Thyroid gland (tissue), 4 donors: ENCODE measurements at regions of chr5 and their contacts with region 1.

Region 1: DNA sequence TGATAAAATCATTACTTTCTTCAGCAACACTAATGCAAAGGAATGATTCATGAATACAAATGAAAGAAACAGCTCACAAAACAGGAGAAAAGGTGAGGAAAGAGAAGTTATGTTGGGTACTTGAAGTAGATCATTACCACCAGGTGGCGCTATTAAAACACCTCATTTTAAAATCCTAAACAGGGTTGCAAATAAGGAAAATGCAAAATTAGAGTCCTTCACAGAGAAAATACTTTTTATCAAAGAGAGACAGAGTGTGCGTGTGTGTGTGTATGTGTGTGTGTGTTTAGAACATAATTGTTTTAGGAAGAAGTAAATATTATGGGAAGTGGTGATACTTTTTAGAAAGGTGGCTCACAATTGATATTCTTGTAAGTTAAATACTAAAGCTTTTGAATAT is 49.5 kb upstream of the CD180 start:
- DNase-seq: no peak
- H3K4me3 ChIP-seq: no peak overlapping the region
- H3K27ac ChIP-seq: peak overlapping the region; percentile 34 to 68 (median 59)
- H3K4me1 ChIP-seq: peaks cover 31 to 37% of the 10 kb centered on the region in 2 donors
- H3K27me3 ChIP-seq: no peaks in the 10 kb centered on the region
- CTCF ChIP-seq: peak; percentile 59 to 98 (median 69)
- POLR2A ChIP-seq: no peak

Region 2: GRCh38 chr5:68252673-68253623 is 1006.8 kb after region 1 on chr5:
- intact Hi-C with region 1: loop called (anchors 10 kb)
- DNase-seq: peak; percentile 65 to 71
- H3K4me3 ChIP-seq: no peak overlapping the region
- H3K27ac ChIP-seq: peak overlapping the region; percentile 2 to 74 (median 19)
- H3K4me1 ChIP-seq: peaks cover 23 to 51% of the 10 kb centered on the region in 2 donors
- H3K27me3 ChIP-seq: no peaks in the 10 kb centered on the region
- CTCF ChIP-seq: peak; percentile 28 to 87 (median 82)
- POLR2A ChIP-seq: no peak